HEK293T (cell line): ENCODE measurements at regions of chr5 and their contacts with region 1.

Region 1: GRCh38 chr5:124748687-124749594 is 2.5 kb upstream of the ZNF608 start:
- DNase-seq: peak; percentile 74

Region 2: DNA sequence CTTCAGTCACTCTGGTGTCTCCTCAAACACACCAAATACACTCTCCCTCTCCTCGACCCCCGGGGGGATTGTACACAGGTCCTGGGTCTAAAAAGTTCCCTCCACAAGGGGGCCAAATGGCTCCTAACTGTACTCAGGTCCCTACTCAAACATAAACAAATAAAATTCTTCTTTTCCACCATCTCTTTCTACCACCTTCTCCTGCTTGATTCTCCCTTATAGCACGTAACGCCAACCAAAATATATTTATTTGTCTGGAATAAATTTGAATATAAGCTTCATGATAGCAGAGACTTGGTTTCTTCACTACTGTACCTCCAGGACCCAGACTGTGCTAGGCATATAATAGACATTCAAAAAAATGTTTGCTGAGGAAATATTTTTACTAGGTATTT is 23.9 kb before region 1 on chr5:
- CTCF ChIA-PET with region 1: no interaction called
- POLR2A ChIA-PET with region 1: interaction called, 10 read pairs
- DNase-seq: no peak

Region 3: DNA sequence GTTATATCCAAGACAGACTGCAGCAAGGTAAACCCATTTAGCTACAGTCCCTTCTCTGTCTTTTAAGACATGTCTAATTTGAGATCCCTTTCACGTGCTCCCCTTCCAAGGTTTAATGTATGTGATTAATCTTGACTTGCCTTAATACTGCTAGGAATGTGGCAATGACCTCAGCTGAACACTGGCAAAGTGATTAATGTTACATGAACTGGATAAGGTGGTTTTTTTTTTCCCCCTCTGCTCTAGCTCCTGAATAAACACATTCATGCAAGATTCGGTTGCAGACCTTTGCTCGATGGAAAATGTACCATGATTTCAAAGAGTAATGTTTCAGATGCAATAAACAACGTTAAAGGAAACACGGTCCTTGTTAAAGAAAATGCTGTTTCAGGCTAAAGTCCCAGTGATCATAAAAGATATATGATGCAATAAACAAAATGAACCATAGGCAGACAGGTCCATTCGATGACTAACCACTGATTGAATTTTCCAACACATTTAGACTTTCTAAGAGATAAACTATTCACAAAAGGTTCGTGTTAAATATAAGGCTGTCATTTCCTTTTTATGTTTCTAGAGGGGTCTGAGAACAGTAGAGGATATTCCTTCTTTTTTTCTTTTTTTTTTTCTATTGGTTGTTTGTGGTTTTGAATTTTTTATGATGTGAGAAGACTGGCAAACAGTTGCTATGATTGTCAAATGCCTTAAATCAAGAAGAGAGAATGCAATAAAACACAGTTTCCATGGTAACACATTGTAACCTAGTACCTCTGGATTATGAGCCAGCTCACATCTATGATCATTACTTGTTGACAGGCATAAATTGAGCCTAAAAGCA is 42.2 kb after region 1 on chr5:
- CTCF ChIA-PET with region 1: no interaction called
- POLR2A ChIA-PET with region 1: interaction called, 34 read pairs
- DNase-seq: peak; percentile 46

Region 4: DNA sequence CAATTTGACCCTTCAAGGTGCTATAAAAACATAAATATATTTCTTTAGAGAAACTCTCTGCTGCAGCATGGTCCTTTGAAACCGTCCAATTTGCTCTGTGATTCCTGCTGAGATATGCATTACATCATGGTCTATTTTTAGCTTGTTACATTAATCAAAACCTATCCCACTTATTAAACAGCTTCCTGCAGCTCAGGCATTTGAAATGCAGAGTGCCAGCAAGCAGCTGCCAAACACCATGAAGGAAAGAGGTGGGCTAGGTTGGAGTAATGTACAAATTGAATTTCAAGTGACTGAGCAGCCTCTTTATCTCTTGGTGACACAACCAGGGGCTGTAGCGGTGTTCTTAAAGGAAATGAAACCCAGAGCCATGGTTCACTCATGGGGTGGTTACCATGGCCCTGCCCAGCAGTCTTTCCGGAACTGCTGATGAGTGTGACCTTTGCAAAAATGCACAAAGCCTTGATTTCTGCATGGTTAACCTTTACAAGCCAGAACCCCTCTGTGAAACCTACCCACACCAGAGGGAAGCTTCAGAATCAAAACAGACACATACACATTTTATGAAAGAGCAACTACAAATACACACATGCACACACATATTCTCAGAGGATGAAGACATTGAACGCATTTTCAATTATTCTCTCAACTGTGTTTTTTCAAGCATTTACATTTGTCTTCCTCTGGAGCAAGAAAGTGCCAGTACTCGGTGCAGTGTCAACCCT is 153.3 kb after region 1 on chr5:
- CTCF ChIA-PET with region 1: no interaction called
- POLR2A ChIA-PET with region 1: interaction called, 15 read pairs
- DNase-seq: peak; percentile 31